Activated CD8-positive, alpha-beta T cell treated with anti-CD3 and anti-CD28 coated beads, Interleukin-2, amount 10 ng/mL, durations not matched to agents 7 days and 5 days (primary cell): ENCODE measurements at regions of chr6 and their contacts with region 1.

Region 1: DNA sequence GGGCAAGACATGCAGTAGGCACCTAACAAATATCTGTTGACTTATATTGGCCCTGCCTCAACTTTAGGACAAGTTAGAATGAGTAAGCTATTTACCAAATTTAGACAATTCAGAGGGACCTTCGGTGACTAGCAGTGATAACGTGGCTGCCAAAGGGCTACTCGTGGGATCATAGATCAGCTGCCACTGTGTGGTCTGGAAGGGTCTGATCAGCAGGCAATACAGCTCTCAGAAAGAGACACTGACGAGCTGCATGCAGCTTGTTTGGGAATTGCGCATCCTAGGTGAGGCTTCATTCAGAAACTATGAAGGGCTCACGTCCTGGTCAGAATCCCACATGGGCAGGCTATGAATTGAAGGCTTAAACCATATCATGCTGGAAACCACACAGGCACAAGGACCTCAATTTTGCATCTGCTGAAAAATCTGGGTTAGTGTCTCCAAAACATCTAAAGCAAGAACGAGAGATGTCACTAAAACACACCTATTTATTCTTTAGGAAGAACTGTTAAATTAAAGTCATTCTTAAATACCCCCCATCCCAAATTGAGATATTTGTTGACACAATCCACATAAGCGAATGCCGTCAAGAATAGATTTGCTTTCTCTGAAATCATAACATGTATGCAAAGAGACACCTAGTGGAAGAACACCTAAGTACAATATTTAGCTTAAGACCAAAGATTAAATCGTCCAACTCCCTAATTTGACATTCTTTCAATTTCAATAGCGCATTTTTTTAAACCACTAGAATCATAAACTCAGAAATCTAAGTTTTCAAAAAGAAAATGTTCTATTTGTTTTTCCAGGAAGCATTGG is 79.6 kb downstream of the IPCEF1 start:
- DNase-seq: no peak
- ATAC-seq: peak; percentile 68
- H3K4me3 Mint-ChIP-seq: peak overlapping the region; percentile 60
- H3K27ac Mint-ChIP-seq: peak overlapping the region; percentile 31
- H3K4me1 Mint-ChIP-seq: peaks cover 35% of the 10 kb centered on the region
- H3K27me3 Mint-ChIP-seq: no peaks in the 10 kb centered on the region

Region 2: DNA sequence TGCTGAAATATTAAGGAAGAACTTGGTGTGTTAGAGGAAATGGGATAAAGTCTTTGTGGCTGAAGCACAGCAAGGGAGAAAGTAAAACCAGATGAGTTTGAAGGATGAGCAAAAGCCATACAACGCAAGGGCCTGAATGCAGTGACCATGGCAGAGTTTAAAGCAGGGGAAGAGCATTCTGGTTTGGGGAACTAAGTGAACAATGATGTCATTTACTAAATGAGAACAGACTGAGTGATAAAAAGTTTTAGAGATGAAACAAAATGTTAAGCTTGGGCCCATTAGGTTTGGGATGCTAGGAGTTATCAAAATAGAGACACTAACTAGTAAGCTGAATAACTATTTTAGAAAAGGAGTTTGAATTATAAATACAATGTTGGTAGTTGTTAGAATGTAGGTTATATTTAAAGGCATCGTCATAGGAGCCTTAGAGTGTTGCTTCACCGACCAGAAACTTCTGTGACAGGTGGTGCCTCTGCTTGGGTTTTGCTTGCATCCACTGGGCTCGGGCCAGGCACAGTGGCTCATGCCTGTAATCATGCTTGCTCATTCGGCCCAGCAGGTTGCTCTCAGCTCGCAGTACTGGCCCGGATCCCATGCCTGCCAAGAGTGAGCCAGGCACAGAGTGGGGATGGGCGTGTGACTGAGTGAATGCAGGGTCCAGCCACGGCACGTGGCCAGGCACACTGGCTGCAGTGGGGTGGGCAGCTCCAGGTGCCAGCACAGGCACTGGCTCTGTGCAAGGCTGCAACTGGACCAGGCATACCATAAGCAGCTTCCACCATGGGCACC is 275.3 kb before region 1 on chr6:
- CTCF ChIA-PET with region 1: no interaction called
- POLR2A ChIA-PET with region 1: no interaction called
- DNase-seq: no peak
- ATAC-seq: no peak
- H3K4me3 Mint-ChIP-seq: no peak overlapping the region
- H3K27ac Mint-ChIP-seq: no peak overlapping the region
- H3K4me1 Mint-ChIP-seq: no peaks in the 10 kb centered on the region
- H3K27me3 Mint-ChIP-seq: no peaks in the 10 kb centered on the region

Region 3: GRCh38 chr6:154169193-154169847 is 107.7 kb before region 1 on chr6:
- CTCF ChIA-PET with region 1: interaction called, 12 read pairs
- POLR2A ChIA-PET with region 1: no interaction called
- DNase-seq: no peak
- ATAC-seq: peak; percentile 23
- H3K4me3 Mint-ChIP-seq: no peak overlapping the region
- H3K27ac Mint-ChIP-seq: peak overlapping the region; percentile 45
- H3K4me1 Mint-ChIP-seq: peaks cover 29% of the 10 kb centered on the region
- H3K27me3 Mint-ChIP-seq: no peaks in the 10 kb centered on the region

Region 4: GRCh38 chr6:154223296-154223695 is 53.7 kb before region 1 on chr6:
- CTCF ChIA-PET with region 1: interaction called, 30 read pairs
- POLR2A ChIA-PET with region 1: interaction called, 4 read pairs
- DNase-seq: no peak
- ATAC-seq: no peak
- H3K4me3 Mint-ChIP-seq: no peak overlapping the region
- H3K27ac Mint-ChIP-seq: no peak overlapping the region
- H3K4me1 Mint-ChIP-seq: peaks cover 43% of the 10 kb centered on the region
- H3K27me3 Mint-ChIP-seq: no peaks in the 10 kb centered on the region

Region 5: GRCh38 chr6:154241591-154241990 is 35.4 kb before region 1 on chr6:
- CTCF ChIA-PET with region 1: interaction called, 72 read pairs
- POLR2A ChIA-PET with region 1: no interaction called
- DNase-seq: no peak
- ATAC-seq: no peak
- H3K4me3 Mint-ChIP-seq: no peak overlapping the region
- H3K27ac Mint-ChIP-seq: peak overlapping the region; percentile 55
- H3K4me1 Mint-ChIP-seq: peaks cover 65% of the 10 kb centered on the region
- H3K27me3 Mint-ChIP-seq: no peaks in the 10 kb centered on the region

Region 6: GRCh38 chr6:154252678-154253077 is 24.3 kb before region 1 on chr6:
- CTCF ChIA-PET with region 1: interaction called, 59 read pairs
- POLR2A ChIA-PET with region 1: interaction called, 5 read pairs
- DNase-seq: no peak
- ATAC-seq: no peak
- H3K4me3 Mint-ChIP-seq: no peak overlapping the region
- H3K27ac Mint-ChIP-seq: peak overlapping the region; percentile 48
- H3K4me1 Mint-ChIP-seq: peaks cover 62% of the 10 kb centered on the region
- H3K27me3 Mint-ChIP-seq: no peaks in the 10 kb centered on the region

Region 7: DNA sequence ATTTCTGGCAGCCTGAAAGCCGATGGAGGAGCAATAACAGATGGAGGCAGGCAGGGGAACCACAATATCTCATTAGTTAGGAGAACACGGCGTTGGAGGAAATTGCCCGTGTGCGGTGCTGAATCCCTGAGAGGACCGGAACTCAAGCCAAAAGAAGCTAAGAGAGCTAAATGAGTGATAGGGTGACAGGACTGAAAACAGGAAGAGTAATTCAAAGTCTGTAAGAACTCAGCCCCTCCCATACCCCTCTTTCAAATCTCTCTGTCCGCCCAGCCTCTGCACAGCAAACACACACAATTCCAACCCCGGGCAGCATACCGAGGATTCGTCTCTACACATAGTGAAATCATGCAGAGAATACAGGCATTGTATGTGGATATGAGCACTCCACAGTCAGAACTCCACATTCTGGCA is 82.1 kb after region 1 on chr6:
- CTCF ChIA-PET with region 1: no interaction called
- POLR2A ChIA-PET with region 1: no interaction called
- DNase-seq: no peak
- ATAC-seq: peak; percentile 53
- H3K4me3 Mint-ChIP-seq: peak overlapping the region; percentile 7
- H3K27ac Mint-ChIP-seq: peak overlapping the region; percentile 23
- H3K4me1 Mint-ChIP-seq: peaks cover 34% of the 10 kb centered on the region
- H3K27me3 Mint-ChIP-seq: no peaks in the 10 kb centered on the region

Region 8: GRCh38 chr6:154370545-154370944 is 93.5 kb after region 1 on chr6:
- CTCF ChIA-PET with region 1: interaction called, 23 read pairs
- POLR2A ChIA-PET with region 1: no interaction called
- DNase-seq: peak; percentile 39
- ATAC-seq: no peak
- H3K4me3 Mint-ChIP-seq: no peak overlapping the region
- H3K27ac Mint-ChIP-seq: no peak overlapping the region
- H3K4me1 Mint-ChIP-seq: no peaks in the 10 kb centered on the region
- H3K27me3 Mint-ChIP-seq: no peaks in the 10 kb centered on the region